ENCODE measurements at regions of chr9 and their contacts with region 1.

Region 1: GRCh38 chr9:101311758-101312420 is 72.9 kb downstream of the BAAT start:
- DNase-seq: peak in 1 of 3 donors; percentile 53
- ATAC-seq: peak; percentile 73
- H3K4me3 ChIP-seq: no peak overlapping the region
- H3K4me1 ChIP-seq: no peaks in the 10 kb centered on the region
- CTCF ChIP-seq: peak; percentile 36

Region 2: GRCh38 chr9:100714372-100715099 is 597.4 kb before region 1 on chr9:
- intact Hi-C with region 1: loop called (anchors 5 to 10 kb)
- DNase-seq: peak in 2 of 3 donors; percentile 45 to 66
- ATAC-seq: peak; percentile 72
- H3K4me3 ChIP-seq: no peak overlapping the region
- H3K4me1 ChIP-seq: no peaks in the 10 kb centered on the region
- CTCF ChIP-seq: peak; percentile 69

Region 3: DNA sequence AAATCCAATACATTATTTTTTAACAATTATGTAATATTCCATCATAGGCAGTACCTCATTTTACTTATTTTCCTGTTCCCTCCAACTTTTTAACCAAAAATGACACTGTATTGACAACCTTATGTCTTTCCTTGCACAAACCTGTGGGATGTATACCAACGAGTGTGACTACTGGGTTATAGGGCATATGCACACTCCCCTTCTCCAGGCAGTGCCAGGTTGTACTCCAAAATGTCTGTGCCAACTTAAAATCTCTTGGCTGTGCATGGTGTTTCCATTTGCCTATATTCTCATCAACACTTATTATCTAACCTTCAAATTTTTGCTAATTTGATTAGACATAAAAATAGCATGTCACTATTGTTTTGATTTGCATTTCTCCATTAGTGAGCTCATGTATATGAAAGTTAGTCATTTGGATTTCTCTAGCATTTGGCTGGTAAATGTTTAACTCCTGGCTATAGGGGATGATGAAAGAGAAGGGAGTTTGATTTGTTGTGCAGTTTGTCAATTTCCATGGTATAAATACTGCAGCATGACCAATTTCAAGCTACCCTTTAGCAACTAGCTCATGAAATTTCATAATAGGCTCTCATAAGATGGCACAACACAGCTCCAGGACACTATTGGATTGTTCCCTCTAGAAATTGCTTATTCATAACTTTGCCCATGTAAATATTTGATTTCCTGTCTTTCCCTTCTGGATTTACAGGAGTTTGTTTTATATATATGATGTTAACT is 57.0 kb before region 1 on chr9:
- intact Hi-C with region 1: no loop called
- DNase-seq: no peak
- ATAC-seq: peak; percentile 12
- H3K4me3 ChIP-seq: no peak overlapping the region
- H3K4me1 ChIP-seq: no peaks in the 10 kb centered on the region
- CTCF ChIP-seq: no peak